ENCODE measurements at regions of chr5 and their contacts with region 1.

Region 1: DNA sequence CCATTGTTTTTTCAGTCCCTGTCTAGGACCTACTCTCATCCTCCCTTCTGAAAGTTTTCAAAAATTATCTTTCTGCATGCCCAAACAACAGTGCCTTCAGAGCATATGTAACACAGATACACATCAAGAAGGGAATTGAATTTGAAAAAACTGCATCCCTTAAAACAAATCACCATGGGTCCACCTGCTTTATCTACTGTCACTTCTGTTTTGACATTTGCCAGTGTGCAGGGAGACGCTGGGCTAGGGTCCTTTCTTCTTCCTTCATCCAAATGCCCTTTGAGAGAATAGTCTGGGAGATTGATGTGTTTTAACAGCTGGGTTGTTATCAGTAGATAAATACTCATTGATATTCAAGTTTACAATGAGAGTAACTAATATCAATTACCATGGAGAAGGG is 1630.1 kb downstream of the MAT2B start:
- DNase-seq: no peak
- ATAC-seq: no peak
- H3K4me3 ChIP-seq: no peak overlapping the region
- H3K4me3 Mint-ChIP-seq: no peak overlapping the region
- H3K27ac ChIP-seq: no peak overlapping the region
- H3K27ac Mint-ChIP-seq: no peak overlapping the region
- H3K4me1 ChIP-seq: no peaks in the 10 kb centered on the region
- H3K4me1 Mint-ChIP-seq: no peaks in the 10 kb centered on the region
- H3K27me3 ChIP-seq: no peaks in the 10 kb centered on the region
- H3K27me3 Mint-ChIP-seq: no peaks in the 10 kb centered on the region

Region 2: GRCh38 chr5:164881442-164881841 is 254.1 kb before region 1 on chr5:
- CTCF ChIA-PET with region 1: no interaction called
- POLR2A ChIA-PET with region 1: no interaction called
- intact Hi-C with region 1: no loop called
- DNase-seq: no peak
- ATAC-seq: no peak
- H3K4me3 ChIP-seq: no peak overlapping the region
- H3K4me3 Mint-ChIP-seq: no peak overlapping the region
- H3K27ac ChIP-seq: no peak overlapping the region
- H3K27ac Mint-ChIP-seq: no peak overlapping the region
- H3K4me1 ChIP-seq: no peaks in the 10 kb centered on the region
- H3K4me1 Mint-ChIP-seq: no peaks in the 10 kb centered on the region
- H3K27me3 ChIP-seq: no peaks in the 10 kb centered on the region
- H3K27me3 Mint-ChIP-seq: no peaks in the 10 kb centered on the region

Region 3: DNA sequence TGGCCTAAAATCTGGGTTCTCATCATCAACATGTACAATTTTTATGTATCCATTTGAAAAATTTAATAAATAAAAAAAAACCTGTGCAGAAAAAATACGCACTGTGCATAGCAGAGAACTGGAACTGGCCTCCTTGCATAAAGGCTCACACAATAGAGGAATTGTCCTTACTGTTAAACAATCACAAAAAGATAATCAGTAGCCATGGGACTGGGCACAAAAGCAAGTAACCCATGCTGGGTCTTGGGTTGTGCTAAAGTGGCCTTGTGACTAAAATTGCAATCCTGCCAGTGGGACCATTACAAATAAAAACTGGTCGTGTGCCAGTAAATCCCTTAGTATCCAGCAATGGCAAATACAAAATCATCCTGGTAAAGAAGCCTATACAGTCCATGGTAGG is 16.5 kb after region 1 on chr5:
- CTCF ChIA-PET with region 1: interaction called, 10 read pairs
- POLR2A ChIA-PET with region 1: no interaction called
- intact Hi-C with region 1: no loop called
- DNase-seq: no peak
- ATAC-seq: no peak
- H3K4me3 ChIP-seq: no peak overlapping the region
- H3K4me3 Mint-ChIP-seq: no peak overlapping the region
- H3K27ac ChIP-seq: no peak overlapping the region
- H3K27ac Mint-ChIP-seq: no peak overlapping the region
- H3K4me1 ChIP-seq: no peaks in the 10 kb centered on the region
- H3K4me1 Mint-ChIP-seq: no peaks in the 10 kb centered on the region
- H3K27me3 ChIP-seq: no peaks in the 10 kb centered on the region
- H3K27me3 Mint-ChIP-seq: no peaks in the 10 kb centered on the region

Measured in naive thymus-derived CD4-positive, alpha-beta T cell (primary cell).